ENCODE measurements at regions of chr6 and their contacts with region 1.

Region 1: DNA sequence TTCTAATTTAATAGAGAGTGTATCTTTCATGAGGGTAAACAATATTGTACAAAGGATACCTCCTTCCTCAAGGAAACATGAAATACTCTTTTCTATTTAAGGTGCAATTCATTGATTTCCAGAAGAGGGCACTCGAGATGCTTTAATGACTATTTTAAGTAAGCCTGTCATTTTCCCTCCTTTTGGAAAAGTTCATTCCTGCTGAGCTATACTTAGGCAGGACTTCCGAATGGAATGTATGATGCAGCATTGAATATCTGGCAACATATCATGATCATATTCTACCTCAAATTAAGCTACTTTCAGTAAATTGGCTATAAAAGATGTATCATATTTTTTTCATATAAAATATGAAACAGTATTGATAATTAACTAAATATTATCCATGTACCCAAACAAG is 5.0 kb downstream of the DST start:
- DNase-seq: no peak
- H3K4me3 ChIP-seq: peak overlapping the region in 1 of 2 donors; percentile 39
- H3K27ac ChIP-seq: peak overlapping the region; percentile 60
- H3K4me1 ChIP-seq: peaks cover 4% of the 10 kb centered on the region
- H3K27me3 ChIP-seq: no peaks in the 10 kb centered on the region
- CTCF ChIP-seq: peak; percentile 34 to 62 (median 44)
- POLR2A ChIP-seq: no peak

Region 2: GRCh38 chr6:56347526-56347925 is 290.1 kb before region 1 on chr6:
- intact Hi-C with region 1: no loop called
- DNase-seq: no peak
- H3K4me3 ChIP-seq: no peak overlapping the region
- H3K27ac ChIP-seq: no peak overlapping the region
- H3K4me1 ChIP-seq: no peaks in the 10 kb centered on the region
- H3K27me3 ChIP-seq: no peaks in the 10 kb centered on the region
- CTCF ChIP-seq: no peak
- POLR2A ChIP-seq: no peak

Region 3: GRCh38 chr6:56699066-56699654 is 61.5 kb after region 1 on chr6:
- intact Hi-C with region 1: loop called (anchors 5 kb)
- DNase-seq: no peak
- H3K4me3 ChIP-seq: no peak overlapping the region
- H3K27ac ChIP-seq: no peak overlapping the region
- H3K4me1 ChIP-seq: no peaks in the 10 kb centered on the region
- H3K27me3 ChIP-seq: no peaks in the 10 kb centered on the region
- CTCF ChIP-seq: peak; percentile 16 to 68 (median 52)
- POLR2A ChIP-seq: no peak

Region 4: DNA sequence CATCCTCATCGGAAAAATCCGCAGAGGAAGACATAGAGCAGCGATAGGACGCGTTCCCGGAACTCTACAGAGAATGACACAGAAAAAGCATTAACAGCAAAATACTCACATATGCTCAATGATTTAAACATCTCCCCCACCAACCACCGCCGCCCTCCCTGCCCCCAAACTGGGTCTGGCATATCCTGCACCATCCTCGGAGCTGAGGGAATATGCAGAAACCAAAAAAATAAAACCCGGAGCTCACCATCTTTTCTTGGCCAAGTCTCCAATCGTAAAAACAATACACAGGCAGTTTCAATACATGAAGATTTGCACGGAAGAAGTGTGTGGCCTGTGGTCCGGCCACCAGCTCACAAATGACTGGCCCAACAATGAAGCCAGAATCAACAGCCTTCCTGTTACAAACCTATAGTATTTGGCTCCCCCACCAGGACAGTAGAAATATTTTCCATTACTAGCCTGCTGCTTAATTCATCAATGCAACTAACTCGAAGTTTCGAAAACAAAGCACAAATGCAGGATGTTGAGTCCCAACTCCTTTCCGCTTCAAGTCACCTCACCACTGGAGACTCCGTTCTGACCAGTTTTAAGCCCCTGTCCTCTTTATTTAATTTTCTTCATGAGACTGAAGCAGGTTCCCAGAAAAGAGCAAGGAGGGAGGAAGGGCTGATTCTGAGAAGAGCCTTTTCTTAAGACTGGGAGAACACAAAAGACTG is 214.1 kb after region 1 on chr6:
- intact Hi-C with region 1: loop called (anchors 5 kb)
- DNase-seq: no peak
- H3K4me3 ChIP-seq: peak overlapping the region; percentile 42 to 49
- H3K27ac ChIP-seq: peak overlapping the region; percentile 75
- H3K4me1 ChIP-seq: peaks cover 20% of the 10 kb centered on the region
- H3K27me3 ChIP-seq: no peaks in the 10 kb centered on the region
- CTCF ChIP-seq: peak; percentile 48 to 67 (median 55)
- POLR2A ChIP-seq: no peak

Measured in vagina (tissue), 2 donors.